ENCODE measurements at regions of chr1 and their contacts with region 1.

Region 1: GRCh38 chr1:246002725-246003441 is 504.2 kb downstream of the SMYD3 start:
- DNase-seq: peak; percentile 93
- H3K4me3 Mint-ChIP-seq: no peak overlapping the region
- H3K27ac Mint-ChIP-seq: no peak overlapping the region
- H3K4me1 Mint-ChIP-seq: no peaks in the 10 kb centered on the region
- H3K27me3 Mint-ChIP-seq: no peaks in the 10 kb centered on the region

Region 2: DNA sequence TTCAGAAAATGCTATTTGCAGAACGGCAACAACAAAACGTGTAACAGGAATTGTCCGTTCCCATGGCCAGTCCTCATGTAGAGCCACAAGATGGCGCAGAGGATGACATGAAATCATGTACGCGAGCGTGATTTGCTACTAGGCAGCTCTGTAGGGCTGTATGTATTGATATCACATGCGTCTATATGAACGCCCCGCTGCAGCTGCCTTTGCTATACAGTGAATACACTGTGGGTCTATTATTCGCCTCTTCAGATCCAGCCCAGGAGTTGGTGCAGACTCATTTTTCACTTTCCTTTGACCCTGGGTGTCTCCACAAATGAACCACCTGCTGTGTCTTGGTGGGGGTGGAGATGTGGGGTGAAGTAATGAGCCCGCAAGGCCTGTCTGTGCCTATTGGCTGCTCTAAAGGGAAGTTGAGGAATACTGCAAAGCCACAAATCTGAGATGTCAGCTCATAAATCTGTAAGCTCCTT is 486.6 kb before region 1 on chr1:
- CTCF ChIA-PET with region 1: no interaction called
- intact Hi-C with region 1: loop called (anchors 2 kb)
- DNase-seq: no peak
- H3K4me3 Mint-ChIP-seq: no peak overlapping the region
- H3K27ac Mint-ChIP-seq: no peak overlapping the region
- H3K4me1 Mint-ChIP-seq: no peaks in the 10 kb centered on the region
- H3K27me3 Mint-ChIP-seq: peaks cover 18% of the 10 kb centered on the region

Region 3: DNA sequence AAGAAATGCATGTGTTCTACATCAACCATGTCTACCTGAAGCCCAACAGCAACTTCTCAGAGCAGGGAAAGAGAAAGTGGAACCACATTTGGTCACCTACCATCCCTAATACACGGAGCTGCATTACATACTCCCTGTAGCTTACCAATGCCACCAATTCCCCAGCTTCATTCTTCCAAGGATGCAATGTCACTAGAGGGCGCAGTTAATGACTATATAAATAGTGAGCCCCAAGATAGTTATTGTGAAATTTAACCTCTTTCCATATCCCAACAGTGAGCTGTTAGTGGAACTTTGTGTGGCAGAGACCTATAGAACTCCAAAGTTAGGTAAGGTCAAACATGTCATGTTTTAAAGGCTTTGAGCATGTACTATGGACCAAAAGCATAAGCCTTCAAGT is 114.1 kb before region 1 on chr1:
- CTCF ChIA-PET with region 1: interaction called, 3 read pairs
- intact Hi-C with region 1: loop called (anchors 1 kb)
- DNase-seq: peak; percentile 28
- H3K4me3 Mint-ChIP-seq: no peak overlapping the region
- H3K27ac Mint-ChIP-seq: no peak overlapping the region
- H3K4me1 Mint-ChIP-seq: no peaks in the 10 kb centered on the region
- H3K27me3 Mint-ChIP-seq: no peaks in the 10 kb centered on the region

Region 4: DNA sequence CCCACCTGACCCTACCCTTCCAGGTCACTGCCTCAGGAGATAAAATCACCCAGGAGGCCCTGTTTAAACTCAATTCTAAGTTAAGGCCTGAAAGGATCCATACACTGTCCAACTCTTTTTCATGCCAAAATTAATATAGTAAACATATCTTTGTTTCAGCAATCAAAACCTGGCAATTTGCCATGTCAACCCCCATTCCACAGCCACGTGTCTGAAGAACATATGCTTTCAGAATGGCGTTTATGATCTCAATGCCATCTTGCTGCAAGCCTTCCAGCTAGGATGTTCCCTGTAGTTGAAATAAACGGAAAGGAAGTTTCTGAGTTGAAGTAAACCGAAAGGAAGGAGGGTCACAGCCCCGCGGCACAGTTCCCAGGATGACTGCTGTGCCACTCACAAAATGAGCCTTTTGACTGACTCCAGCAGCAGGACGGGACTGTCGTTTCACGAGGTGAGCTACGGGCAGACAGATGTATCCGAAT is 32.2 kb after region 1 on chr1:
- CTCF ChIA-PET with region 1: no interaction called
- intact Hi-C with region 1: no loop called
- DNase-seq: no peak
- H3K4me3 Mint-ChIP-seq: no peak overlapping the region
- H3K27ac Mint-ChIP-seq: no peak overlapping the region
- H3K4me1 Mint-ChIP-seq: peaks cover 7% of the 10 kb centered on the region
- H3K27me3 Mint-ChIP-seq: no peaks in the 10 kb centered on the region